ENCODE measurements at regions of chr4 and their contacts with region 1.

Region 1: GRCh38 chr4:1746265-1746691 is 25.0 kb downstream of the TACC3 start:
- DNase-seq: peak; percentile 73 to 77
- ATAC-seq: peak; percentile 65 to 88
- H3K4me3 ChIP-seq: no peak overlapping the region
- H3K27ac ChIP-seq: no peak overlapping the region
- H3K4me1 ChIP-seq: no peaks in the 10 kb centered on the region; the same call in 2 of the 3 replicates
- CTCF ChIP-seq: peak; percentile 54
- EP300 ChIP-seq: no peak
- POLR2A ChIP-seq: no peak
- RAD21 ChIP-seq: peak; percentile 52 to 56

Region 2: GRCh38 chr4:1759818-1760223 is 13.5 kb after region 1 on chr4:
- CTCF ChIA-PET with region 1: interaction called, 23 read pairs
- POLR2A ChIA-PET with region 1: no interaction called
- DNase-seq: no peak
- ATAC-seq: peak in 1 of 2 experiments; percentile 37; a peak in 3 of 6 replicates
- H3K4me3 ChIP-seq: no peak overlapping the region
- H3K27ac ChIP-seq: peak overlapping the region in 1 of 2 experiments; percentile 76; a peak in 3 of 6 replicates
- H3K4me1 ChIP-seq: peaks cover 22% of the 10 kb centered on the region
- CTCF ChIP-seq: no peak
- EP300 ChIP-seq: no peak
- POLR2A ChIP-seq: no peak
- RAD21 ChIP-seq: 0 out of 5 replicates have a peak, but pooled peaks of 1 of the 2 experiments have one; percentile 12

Region 3: GRCh38 chr4:1784789-1785591 is 38.7 kb after region 1 on chr4:
- CTCF ChIA-PET with region 1: interaction called, 23 read pairs
- POLR2A ChIA-PET with region 1: no interaction called
- DNase-seq: no peak
- ATAC-seq: peak in 1 of 2 experiments; percentile 25; a peak in 2 of 6 replicates
- H3K4me3 ChIP-seq: no peak overlapping the region
- H3K27ac ChIP-seq: no peak overlapping the region
- H3K4me1 ChIP-seq: no peaks in the 10 kb centered on the region
- CTCF ChIP-seq: no peak
- EP300 ChIP-seq: no peak
- POLR2A ChIP-seq: no peak
- RAD21 ChIP-seq: no peak

Region 4: GRCh38 chr4:1809754-1810511 is 63.7 kb after region 1 on chr4:
- CTCF ChIA-PET with region 1: interaction called, 227 read pairs
- POLR2A ChIA-PET with region 1: no interaction called
- DNase-seq: peak; percentile 69 to 72
- ATAC-seq: peak; percentile 85 to 94
- H3K4me3 ChIP-seq: no peak overlapping the region
- H3K27ac ChIP-seq: no peak overlapping the region
- H3K4me1 ChIP-seq: no peaks in the 10 kb centered on the region
- CTCF ChIP-seq: peak; percentile 85
- EP300 ChIP-seq: no peak
- POLR2A ChIP-seq: no peak
- RAD21 ChIP-seq: peak; percentile 86 to 87

Measured in A549 (cell line).